Dorsolateral prefrontal cortex (tissue), 120 donors: ENCODE measurements at regions of chr1 and their contacts with region 1.

Region 1: GRCh38 chr1:205977402-205978014 is 25.7 kb downstream of the RAB7B start:
- DNase-seq: peak; percentile 66 to 84 (median 72)
- H3K4me3 ChIP-seq: no peak overlapping the region
- H3K27ac ChIP-seq: peak overlapping the region in 58 of 59 donors; percentile 13 to 92 (median 80)
- H3K27me3 ChIP-seq: no peaks in the 10 kb centered on the region
- CTCF ChIP-seq: peak; percentile 79 to 100 (median 99)

Region 2: GRCh38 chr1:205668951-205669340 is 308.6 kb before region 1 on chr1:
- intact Hi-C with region 1: loop called (anchors 5 to 10 kb)
- DNase-seq: no peak
- H3K4me3 ChIP-seq: peak overlapping the region in 31 of 59 donors; percentile 0 to 64 (median 40)
- H3K27ac ChIP-seq: peak overlapping the region in 57 of 59 donors; percentile 49 to 100 (median 91)
- H3K27me3 ChIP-seq: no peaks in the 10 kb centered on the region
- CTCF ChIP-seq: peak in 4 of 56 donors; percentile 4 to 21 (median 16)

Region 3: GRCh38 chr1:205812878-205813754 is 164.4 kb before region 1 on chr1 and contains the start of gene SLC41A1:
- intact Hi-C with region 1: loop called in 1 of 2 experiments (anchors 5 kb)
- DNase-seq: peak; percentile 91 to 98 (median 96)
- H3K4me3 ChIP-seq: peak within 1 kb of the TSS; percentile 47 to 99 (median 90)
- H3K27ac ChIP-seq: peak within 1 kb of the TSS; percentile 68 to 97 (median 93)
- H3K27me3 ChIP-seq: no peaks in the 10 kb centered on the region
- CTCF ChIP-seq: peak in 16 of 56 donors; percentile 3 to 49 (median 14)
- total RNA-seq, gene SLC41A1: 27.3 to 87.8 (median 42.5) TPM

Region 4: GRCh38 chr1:205919026-205919746 is 58.3 kb before region 1 on chr1:
- intact Hi-C with region 1: loop called (anchors 1 kb)
- DNase-seq: peak; percentile 74 to 95 (median 88)
- H3K4me3 ChIP-seq: no peak overlapping the region
- H3K27ac ChIP-seq: peak overlapping the region in 29 of 59 donors; percentile 1 to 72 (median 41)
- H3K27me3 ChIP-seq: no peaks in the 10 kb centered on the region
- CTCF ChIP-seq: peak in 55 of 56 donors; percentile 81 to 99 (median 96)

Region 5: GRCh38 chr1:205939690-205940330 is 37.7 kb before region 1 on chr1:
- intact Hi-C with region 1: loop called in 1 of 2 experiments (anchors 5 kb)
- DNase-seq: no peak
- H3K4me3 ChIP-seq: no peak overlapping the region
- H3K27ac ChIP-seq: no peak overlapping the region
- H3K27me3 ChIP-seq: peaks cover 0 to 7% (median 0%) of the 10 kb centered on the region in 45 donors
- CTCF ChIP-seq: no peak